Endothelial cell of umbilical vein (primary cell): ENCODE measurements at regions of chr6 and their contacts with region 1.

Region 1: DNA sequence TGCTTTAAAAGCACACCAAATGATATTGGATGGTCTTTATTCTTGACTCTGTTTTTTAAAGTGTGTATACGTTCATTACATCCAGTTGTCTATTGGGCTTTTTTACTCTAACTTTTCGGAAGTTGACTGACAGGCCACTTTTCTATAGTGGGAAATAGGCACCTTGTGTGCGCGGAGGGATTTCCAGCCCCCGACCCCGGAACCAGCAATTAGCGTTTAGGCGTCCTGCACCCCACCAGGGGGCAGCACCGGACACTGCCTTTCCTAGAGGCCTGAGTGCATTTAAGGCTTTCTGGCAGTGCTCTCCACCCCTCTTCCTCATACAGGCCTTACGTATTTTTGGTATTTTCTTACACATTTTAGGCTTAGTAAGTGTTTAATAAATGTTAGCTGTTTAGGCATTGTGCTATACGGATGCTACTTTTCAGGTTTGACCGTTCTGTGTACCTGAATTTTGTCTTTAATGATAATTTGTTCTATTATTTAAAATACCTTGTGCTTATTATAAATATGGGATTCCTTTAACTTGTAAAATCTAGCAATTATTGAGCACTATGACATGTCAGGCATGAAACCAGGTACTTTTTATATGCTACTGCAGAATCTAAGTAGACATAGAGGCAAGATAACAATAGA is 231.8 kb downstream of the BCKDHB start:
- DNase-seq: peak; percentile 31
- H3K4me3 ChIP-seq: no peak overlapping the region
- H3K27ac ChIP-seq: no peak overlapping the region
- H3K4me1 ChIP-seq: peaks cover 4% of the 10 kb centered on the region
- H3K27me3 ChIP-seq: no peaks in the 10 kb centered on the region
- CTCF ChIP-seq: peak; percentile 64 to 69
- POLR2A ChIP-seq: no peak

Region 2: DNA sequence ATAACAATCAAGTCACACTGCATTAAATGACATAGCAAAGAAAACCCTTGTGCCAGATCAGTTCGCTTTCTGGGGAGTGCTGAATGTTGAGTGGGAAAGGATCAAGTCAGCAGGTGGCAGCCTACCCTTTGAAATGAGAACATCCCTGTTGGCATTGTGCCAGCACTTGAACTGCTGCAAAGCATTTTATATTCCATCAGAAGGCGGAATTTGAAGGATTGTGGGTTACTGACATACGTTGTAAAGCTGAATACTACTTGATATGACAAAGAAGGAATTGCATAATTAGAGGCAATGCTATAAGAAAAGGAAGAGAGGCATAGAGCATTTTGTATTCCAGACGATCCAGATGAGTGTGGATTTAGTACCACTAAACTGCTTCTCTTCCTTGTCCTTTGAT is 205.3 kb before region 1 on chr6:
- CTCF ChIA-PET with region 1: no interaction called
- POLR2A ChIA-PET with region 1: no interaction called
- dilution Hi-C with region 1: no loop called
- intact Hi-C with region 1: loop called (anchors 1 kb)
- DNase-seq: peak; percentile 58
- H3K4me3 ChIP-seq: no peak overlapping the region
- H3K27ac ChIP-seq: no peak overlapping the region
- H3K4me1 ChIP-seq: peaks cover 7% of the 10 kb centered on the region
- H3K27me3 ChIP-seq: no peaks in the 10 kb centered on the region
- CTCF ChIP-seq: peak; percentile 39 to 45
- POLR2A ChIP-seq: no peak

Region 3: DNA sequence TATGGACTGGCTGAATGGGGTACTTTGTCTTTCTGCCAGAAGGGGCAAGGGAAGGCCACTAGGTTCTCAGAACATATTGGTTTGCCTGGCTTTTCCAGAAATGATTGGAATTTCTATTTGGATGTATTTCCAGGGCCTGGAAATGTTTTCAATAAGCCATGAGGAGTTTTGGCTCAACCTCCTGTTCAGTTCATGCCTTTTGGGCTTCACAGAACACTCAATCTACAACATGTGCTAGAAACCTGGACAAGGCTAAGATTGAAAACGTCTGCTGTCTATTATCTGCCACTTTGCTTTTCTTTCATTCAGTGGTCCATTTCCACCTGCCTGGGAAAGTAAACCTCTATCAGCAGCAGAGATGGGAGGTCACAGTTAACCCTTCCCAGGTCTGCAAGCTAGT is 620.7 kb after region 1 on chr6:
- CTCF ChIA-PET with region 1: no interaction called
- POLR2A ChIA-PET with region 1: no interaction called
- dilution Hi-C with region 1: no loop called
- intact Hi-C with region 1: loop called (anchors 10 kb)
- DNase-seq: no peak
- H3K4me3 ChIP-seq: no peak overlapping the region
- H3K27ac ChIP-seq: no peak overlapping the region
- H3K4me1 ChIP-seq: peaks cover 17% of the 10 kb centered on the region
- H3K27me3 ChIP-seq: no peaks in the 10 kb centered on the region
- CTCF ChIP-seq: no peak
- POLR2A ChIP-seq: no peak